Activated naive CD4-positive, alpha-beta T cell treated with anti-CD3 and anti-CD28 coated beads for 36 hours (primary cell): ENCODE measurements at regions of chr11 and their contacts with region 1.

Region 1: GRCh38 chr11:72080256-72080974 is at the starts of genes LRRC51 and NUMA1:
- DNase-seq: peak; percentile 100
- H3K4me3 Mint-ChIP-seq: peak within 1 kb of the TSS; percentile 88
- H3K27ac Mint-ChIP-seq: peak within 1 kb of the TSS; percentile 90
- H3K4me1 Mint-ChIP-seq: peaks cover 37% of the 10 kb centered on the region
- H3K27me3 Mint-ChIP-seq: no peaks in the 10 kb centered on the region
- total RNA-seq, gene LRRC51: 6.8 to 8.3 TPM
- total RNA-seq, gene NUMA1: 189 to 194 TPM

Region 2: GRCh38 chr11:71928737-71929452 is 151.5 kb before region 1 on chr11 and contains the start of gene RNF121:
- CTCF ChIA-PET with region 1: no interaction called
- intact Hi-C with region 1: loop called (anchors 1 kb)
- DNase-seq: peak; percentile 99
- H3K4me3 Mint-ChIP-seq: peak within 1 kb of the TSS; percentile 96
- H3K27ac Mint-ChIP-seq: peak within 1 kb of the TSS; percentile 100
- H3K4me1 Mint-ChIP-seq: peaks cover 51% of the 10 kb centered on the region
- H3K27me3 Mint-ChIP-seq: no peaks in the 10 kb centered on the region
- total RNA-seq, gene RNF121: 15.4 to 16.8 TPM

Region 3: DNA sequence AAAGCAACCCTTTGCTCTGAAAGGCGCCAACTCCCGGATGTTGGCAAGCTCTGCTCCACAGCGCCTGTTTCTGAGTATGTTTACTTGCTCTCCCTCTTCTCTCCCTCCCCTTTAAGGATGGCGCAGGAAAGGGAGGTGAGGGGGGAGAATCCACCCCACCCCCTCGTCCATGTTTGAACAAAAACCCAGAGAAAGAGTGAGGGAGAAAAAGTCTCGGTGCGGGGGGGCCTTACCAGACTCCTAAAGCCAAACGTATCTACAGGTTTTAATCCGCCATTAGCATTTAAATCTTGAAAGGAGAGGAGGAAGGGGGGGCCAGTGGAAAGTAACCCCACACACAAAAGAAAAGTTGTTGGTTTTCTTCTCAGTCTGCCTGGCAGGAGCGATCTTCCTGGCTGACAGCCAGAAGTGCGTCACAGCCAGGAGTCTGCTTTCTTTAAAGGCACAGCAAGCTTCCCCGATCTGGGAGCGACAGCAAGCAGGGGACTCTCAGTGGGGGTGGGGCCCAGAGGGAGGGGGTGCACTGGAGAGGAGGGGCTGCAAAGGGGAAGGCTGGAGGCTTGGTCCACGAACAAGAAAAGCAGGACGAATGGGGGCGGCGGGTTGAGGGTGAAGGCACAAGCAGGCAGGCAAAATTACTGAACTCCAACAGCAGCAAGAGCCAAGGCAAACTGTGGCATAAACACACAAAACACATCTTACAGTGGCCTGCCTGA is 39.5 kb before region 1 on chr11:
- CTCF ChIA-PET with region 1: interaction called, 4 read pairs
- intact Hi-C with region 1: loop called (anchors 1 kb)
- DNase-seq: peak; percentile 85
- H3K4me3 Mint-ChIP-seq: no peak overlapping the region
- H3K27ac Mint-ChIP-seq: no peak overlapping the region
- H3K4me1 Mint-ChIP-seq: peaks cover 44% of the 10 kb centered on the region
- H3K27me3 Mint-ChIP-seq: no peaks in the 10 kb centered on the region

Region 4: GRCh38 chr11:72102946-72103753 is 22.7 kb after region 1 on chr11 and contains the start of gene LAMTOR1:
- CTCF ChIA-PET with region 1: interaction called, 4 read pairs
- intact Hi-C with region 1: loop called (anchors 1 kb)
- DNase-seq: peak; percentile 100
- H3K4me3 Mint-ChIP-seq: peak within 1 kb of the TSS; percentile 87
- H3K27ac Mint-ChIP-seq: peak within 1 kb of the TSS; percentile 77
- H3K4me1 Mint-ChIP-seq: peaks cover 36% of the 10 kb centered on the region
- H3K27me3 Mint-ChIP-seq: no peaks in the 10 kb centered on the region
- total RNA-seq, gene LAMTOR1: 39.1 to 41.8 TPM

Region 5: GRCh38 chr11:72222907-72223614 is 142.6 kb after region 1 on chr11:
- CTCF ChIA-PET with region 1: no interaction called
- intact Hi-C with region 1: loop called (anchors 1 kb)
- DNase-seq: peak; percentile 96
- H3K4me3 Mint-ChIP-seq: peak overlapping the region; percentile 73
- H3K27ac Mint-ChIP-seq: peak overlapping the region; percentile 75
- H3K4me1 Mint-ChIP-seq: peaks cover 20% of the 10 kb centered on the region
- H3K27me3 Mint-ChIP-seq: peaks cover 3% of the 10 kb centered on the region

Region 6: DNA sequence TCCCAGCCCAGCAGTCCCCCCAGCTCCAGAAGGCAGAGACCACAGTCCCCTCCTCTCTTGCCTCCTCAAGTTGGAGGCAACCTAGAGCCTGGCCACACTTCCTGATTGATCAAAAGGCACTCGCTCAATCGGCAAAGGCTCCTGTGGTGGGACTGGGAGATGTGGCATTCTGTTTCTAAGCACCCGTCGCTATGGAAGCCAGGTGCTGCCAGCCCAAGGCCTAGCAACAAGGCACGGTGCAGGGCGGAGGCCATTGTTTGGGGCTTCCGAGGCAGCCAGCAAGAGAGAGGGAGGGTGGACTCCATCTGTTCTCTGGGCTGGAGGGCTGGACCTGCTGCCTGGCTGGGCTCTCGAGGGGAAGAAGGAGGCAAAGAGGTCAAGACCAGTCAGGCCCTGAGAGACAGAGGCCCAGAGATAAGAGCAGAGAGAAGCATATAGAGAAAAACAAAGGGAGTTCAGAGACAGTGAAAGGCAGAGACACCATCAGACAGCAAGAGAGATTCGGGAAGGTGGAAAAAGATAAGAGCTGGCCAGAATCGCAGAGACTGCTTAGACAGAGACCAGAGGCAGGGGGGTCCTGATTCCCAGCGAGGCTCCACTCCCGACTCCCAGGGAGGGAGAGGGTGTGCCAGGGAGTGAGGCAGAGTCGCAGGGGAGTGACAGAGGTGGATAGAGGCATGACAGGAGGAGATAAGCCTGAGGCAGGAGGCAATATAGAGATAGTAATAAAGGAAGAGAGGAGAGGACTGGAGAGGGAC is 572.6 kb after region 1 on chr11:
- CTCF ChIA-PET with region 1: no interaction called
- intact Hi-C with region 1: no loop called
- DNase-seq: no peak
- H3K4me3 Mint-ChIP-seq: no peak overlapping the region
- H3K27ac Mint-ChIP-seq: no peak overlapping the region
- H3K4me1 Mint-ChIP-seq: no peaks in the 10 kb centered on the region
- H3K27me3 Mint-ChIP-seq: no peaks in the 10 kb centered on the region

Region 7: GRCh38 chr11:73141848-73142286 is 1061.5 kb after region 1 on chr11:
- CTCF ChIA-PET with region 1: no interaction called
- intact Hi-C with region 1: loop called (anchors 2 kb)
- DNase-seq: peak; percentile 64
- H3K4me3 Mint-ChIP-seq: peak overlapping the region; percentile 96
- H3K27ac Mint-ChIP-seq: peak overlapping the region; percentile 92
- H3K4me1 Mint-ChIP-seq: peaks cover 42% of the 10 kb centered on the region
- H3K27me3 Mint-ChIP-seq: no peaks in the 10 kb centered on the region